ENCODE measurements at regions of chr3 and their contacts with region 1.

Region 1: DNA sequence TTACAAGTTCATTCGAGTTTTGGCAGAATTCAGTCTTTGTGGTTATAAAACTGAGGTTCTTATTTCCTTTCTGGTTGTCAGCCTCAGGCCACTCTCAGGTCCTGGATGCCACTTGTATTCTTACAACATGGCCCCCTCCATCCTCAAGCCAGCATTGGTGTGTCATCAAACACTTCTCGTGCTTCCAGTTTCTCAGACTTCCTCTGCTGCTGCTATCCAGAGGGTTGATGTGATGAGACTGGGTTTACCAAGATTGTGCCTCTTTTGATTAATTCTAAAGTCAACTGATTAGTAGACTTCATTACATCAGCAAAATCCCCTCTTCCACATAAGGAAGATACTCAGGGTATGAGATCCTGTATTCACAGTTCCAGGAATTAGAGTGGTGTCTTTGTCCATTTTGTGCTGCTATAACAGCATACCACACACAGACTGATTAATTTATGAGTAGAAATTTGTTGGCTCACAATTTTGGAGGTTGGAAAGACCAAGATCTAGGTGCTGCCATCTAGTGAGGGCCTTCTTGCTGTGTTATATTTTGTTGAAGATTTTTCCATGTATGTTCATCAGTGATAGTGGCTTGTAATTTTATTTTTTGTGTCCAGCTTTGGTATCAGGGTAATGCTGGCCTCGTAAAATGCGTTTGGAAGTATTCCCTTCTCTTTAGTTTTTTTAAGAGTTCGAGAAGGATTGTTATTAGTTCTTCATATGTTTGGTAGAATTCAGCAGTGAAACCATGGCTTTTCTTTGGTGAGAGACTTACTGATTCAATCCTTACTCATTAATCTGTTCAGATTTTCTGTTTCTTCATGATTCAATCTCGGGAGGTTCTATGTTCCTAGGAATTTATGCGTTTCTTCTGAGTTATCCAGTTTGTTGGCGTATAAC is 11.1 kb downstream of the LRCH3 start:
- DNase-seq: no peak
- ATAC-seq: peak; percentile 40
- H3K4me3 Mint-ChIP-seq: no peak overlapping the region
- H3K27ac Mint-ChIP-seq: peak overlapping the region; percentile 65
- H3K4me1 Mint-ChIP-seq: peaks cover 56% of the 10 kb centered on the region
- H3K27me3 Mint-ChIP-seq: no peaks in the 10 kb centered on the region
- CTCF ChIP-seq: no peak

Region 2: DNA sequence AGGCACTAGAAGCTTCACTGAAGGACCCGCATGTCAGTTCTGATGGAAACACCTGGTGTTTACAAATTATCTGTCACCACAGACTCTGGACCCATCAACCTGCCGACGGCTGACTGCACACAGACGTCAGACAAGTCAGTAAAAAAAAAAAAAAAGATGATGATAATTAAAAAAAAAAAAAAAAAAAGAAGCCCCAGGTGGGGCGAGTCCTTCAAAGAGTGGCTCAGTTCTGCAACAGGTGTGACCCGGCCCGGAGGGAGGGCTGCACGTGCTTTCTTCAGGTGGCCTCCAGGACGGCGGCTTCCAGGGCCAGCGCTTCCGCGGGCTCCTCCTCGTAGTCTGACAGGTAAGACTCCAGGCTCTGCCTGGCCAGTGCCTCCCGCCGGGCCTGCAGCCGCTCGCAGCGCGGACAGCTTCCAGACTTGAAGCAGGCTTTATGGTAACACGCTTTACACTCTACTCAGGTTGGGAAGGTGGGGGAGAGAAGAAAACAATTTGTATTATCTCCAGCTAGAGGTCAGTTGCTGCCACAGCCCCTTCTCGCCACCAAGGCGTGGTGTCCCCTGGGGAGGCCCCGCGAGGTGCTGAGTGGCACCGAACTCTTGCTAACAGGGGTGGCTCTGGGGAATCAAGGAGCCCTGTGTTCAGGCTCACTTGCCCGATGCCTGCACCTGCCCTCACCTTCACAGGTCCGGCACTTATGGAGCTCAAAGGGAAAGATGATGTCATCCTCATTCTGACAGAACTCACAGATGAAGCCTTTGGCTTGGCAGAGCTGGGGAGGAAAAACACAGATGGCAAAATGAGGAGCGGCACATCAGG is 127.2 kb before region 1 on chr3:
- CTCF ChIA-PET with region 1: no interaction called
- POLR2A ChIA-PET with region 1: no interaction called
- intact Hi-C with region 1: loop called (anchors 5 kb)
- DNase-seq: peak; percentile 39
- ATAC-seq: peak; percentile 86
- H3K4me3 Mint-ChIP-seq: peak overlapping the region; percentile 70
- H3K27ac Mint-ChIP-seq: peak overlapping the region; percentile 70
- H3K4me1 Mint-ChIP-seq: peaks cover 43% of the 10 kb centered on the region
- H3K27me3 Mint-ChIP-seq: no peaks in the 10 kb centered on the region
- CTCF ChIP-seq: no peak

Region 3: GRCh38 chr3:197736491-197737318 is 65.4 kb before region 1 on chr3 and contains the start of gene RUBCN:
- CTCF ChIA-PET with region 1: no interaction called
- POLR2A ChIA-PET with region 1: interaction called, 5 read pairs
- intact Hi-C with region 1: loop called (anchors 1 kb)
- DNase-seq: peak; percentile 88
- ATAC-seq: peak; percentile 87
- H3K4me3 Mint-ChIP-seq: peak within 1 kb of the TSS; percentile 94
- H3K27ac Mint-ChIP-seq: peak within 1 kb of the TSS; percentile 98
- H3K4me1 Mint-ChIP-seq: peaks cover 58% of the 10 kb centered on the region
- H3K27me3 Mint-ChIP-seq: no peaks in the 10 kb centered on the region
- CTCF ChIP-seq: no peak
- total RNA-seq, gene RUBCN: 196 and 217 TPM in 2 replicates

Region 4: DNA sequence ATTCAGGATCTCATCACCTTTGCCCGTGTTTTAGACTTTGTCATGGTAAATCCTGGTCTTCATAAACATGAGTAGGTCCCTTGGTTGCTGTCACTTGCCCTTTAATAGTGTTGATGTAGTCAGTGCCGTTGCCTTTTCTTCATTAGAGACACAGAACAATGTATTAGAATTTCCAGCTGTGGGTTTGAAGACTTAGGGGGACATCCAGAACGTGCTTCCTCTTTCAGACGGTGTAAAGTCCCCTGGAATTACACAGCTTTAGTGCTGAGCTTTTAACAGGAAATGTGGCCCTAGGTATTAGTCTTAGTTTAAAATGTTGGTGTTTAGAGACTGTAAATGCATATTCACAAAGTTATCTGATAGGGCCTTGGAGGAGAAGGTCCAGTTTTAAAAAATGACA is 19.9 kb before region 1 on chr3:
- CTCF ChIA-PET with region 1: interaction called, 5 read pairs
- POLR2A ChIA-PET with region 1: interaction called, 9 read pairs
- intact Hi-C with region 1: loop called (anchors 1 kb)
- DNase-seq: no peak
- ATAC-seq: peak; percentile 91
- H3K4me3 Mint-ChIP-seq: peak overlapping the region; percentile 60
- H3K27ac Mint-ChIP-seq: peak overlapping the region; percentile 80
- H3K4me1 Mint-ChIP-seq: peaks cover 41% of the 10 kb centered on the region
- H3K27me3 Mint-ChIP-seq: no peaks in the 10 kb centered on the region
- CTCF ChIP-seq: no peak

Measured in activated B cell treated with CpG ODN at 0.5 μM for 24 hours (primary cell).